Testis (tissue), 5 donors: ENCODE measurements at regions of chr3 and their contacts with region 1.

Region 1: DNA sequence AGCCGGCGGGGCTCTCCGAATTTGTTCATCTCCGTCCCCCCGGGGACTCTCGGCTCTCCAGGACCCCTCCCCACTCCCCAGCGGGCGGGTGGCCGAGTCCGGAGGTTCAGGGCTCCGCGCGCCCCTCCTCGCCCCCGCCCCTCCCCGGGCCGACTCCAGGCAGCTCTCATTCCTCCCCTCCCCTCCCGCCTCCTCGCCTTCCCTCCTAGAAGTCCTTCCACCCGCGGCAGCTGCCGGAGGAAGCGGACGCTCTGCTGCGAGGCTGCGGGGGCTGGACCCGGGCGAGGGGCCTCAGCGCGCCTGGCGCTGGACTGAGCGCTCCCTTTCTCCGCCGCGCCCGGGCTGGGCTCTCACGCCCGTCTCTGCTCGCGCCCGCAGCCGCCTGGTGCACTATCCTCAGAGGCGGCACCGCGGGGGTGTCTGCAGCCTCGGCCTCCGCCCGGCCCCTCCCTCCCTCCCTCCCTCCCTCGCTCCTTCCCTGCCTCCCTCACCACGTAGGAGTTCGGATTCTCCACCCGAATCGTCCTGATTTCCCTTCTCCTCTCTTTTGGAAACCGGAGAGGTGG is at the start of gene ROBO2:
- DNase-seq: peak; percentile 81
- H3K4me3 ChIP-seq: peak within 1 kb of the TSS; percentile 58 to 76
- H3K27ac ChIP-seq: peak within 1 kb of the TSS; percentile 25 to 63
- H3K4me1 ChIP-seq: no peaks in the 10 kb centered on the region
- H3K27me3 ChIP-seq: no peaks in the 10 kb centered on the region
- CTCF ChIP-seq: no peak
- POLR2A ChIP-seq: no peak
- total RNA-seq, gene ROBO2: 17.7 to 23.3 TPM

Region 2: GRCh38 chr3:77096966-77097890 is 57.5 kb after region 1 on chr3:
- intact Hi-C with region 1: no loop called
- DNase-seq: no peak
- H3K4me3 ChIP-seq: no peak overlapping the region
- H3K27ac ChIP-seq: no peak overlapping the region
- H3K4me1 ChIP-seq: no peaks in the 10 kb centered on the region
- H3K27me3 ChIP-seq: no peaks in the 10 kb centered on the region
- CTCF ChIP-seq: no peak
- POLR2A ChIP-seq: no peak

Region 3: DNA sequence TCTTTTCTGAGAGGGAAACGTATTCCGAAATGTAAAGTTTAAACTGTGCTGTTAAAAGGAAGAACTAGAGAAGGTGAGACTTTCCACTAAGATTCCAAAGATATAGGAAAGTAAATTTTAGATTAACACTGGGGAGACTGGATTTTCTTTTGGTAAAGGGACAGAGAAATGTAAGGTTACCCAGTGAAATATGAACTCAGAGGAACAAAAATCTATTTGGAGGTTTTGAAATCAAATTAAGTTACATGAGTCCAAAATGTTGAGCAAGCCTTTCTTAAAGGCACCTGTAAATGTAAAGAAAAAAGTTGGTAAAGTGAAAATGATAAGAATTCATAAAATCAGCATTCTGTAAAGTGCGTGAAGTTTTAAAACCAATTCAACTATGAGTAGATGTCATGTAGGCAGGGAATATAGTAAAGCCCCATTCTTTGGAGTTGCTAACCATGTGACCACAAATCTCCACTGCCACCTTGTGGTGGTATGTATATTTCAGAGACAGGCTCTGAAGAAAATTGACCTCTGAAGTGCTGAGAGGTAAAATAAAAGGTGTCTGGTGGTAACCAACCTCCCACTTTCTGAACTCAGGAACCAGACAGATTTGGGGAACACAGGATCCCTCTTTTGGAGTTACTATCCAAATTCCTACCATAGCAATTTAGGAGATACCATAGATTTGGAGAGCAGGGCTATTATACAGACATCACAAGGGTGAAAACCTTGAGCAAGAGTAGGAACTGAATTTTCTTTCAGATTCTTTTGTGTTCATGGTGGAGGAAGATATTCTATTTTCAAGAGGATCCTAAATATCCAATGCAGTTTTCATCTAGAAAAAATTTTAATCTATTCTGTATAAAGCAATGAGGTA is 215.5 kb after region 1 on chr3:
- intact Hi-C with region 1: loop called (anchors 5 kb)
- DNase-seq: peak; percentile 75
- H3K4me3 ChIP-seq: no peak overlapping the region
- H3K27ac ChIP-seq: no peak overlapping the region
- H3K4me1 ChIP-seq: no peaks in the 10 kb centered on the region
- H3K27me3 ChIP-seq: no peaks in the 10 kb centered on the region
- CTCF ChIP-seq: peak; percentile 80 to 84 (median 82)
- POLR2A ChIP-seq: no peak